ENCODE measurements at regions of chr2 and their contacts with region 1.

Region 1: GRCh38 chr2:42859006-42859552 is 66.7 kb upstream of the HAAO start:
- DNase-seq: peak; percentile 17 to 77 (median 50)
- ATAC-seq: peak; percentile 62
- H3K4me3 ChIP-seq: no peak overlapping the region
- H3K4me3 Mint-ChIP-seq: no peak overlapping the region
- H3K27ac ChIP-seq: no peak overlapping the region
- H3K27ac Mint-ChIP-seq: no peak overlapping the region
- H3K4me1 ChIP-seq: no peaks in the 10 kb centered on the region
- H3K4me1 Mint-ChIP-seq: no peaks in the 10 kb centered on the region
- H3K27me3 ChIP-seq: no peaks in the 10 kb centered on the region
- H3K27me3 Mint-ChIP-seq: no peaks in the 10 kb centered on the region
- CTCF ChIP-seq: peak; percentile 88

Region 2: GRCh38 chr2:42823744-42824453 is 35.2 kb before region 1 on chr2:
- CTCF ChIA-PET with region 1: no interaction called
- POLR2A ChIA-PET with region 1: no interaction called
- intact Hi-C with region 1: no loop called
- DNase-seq: no peak
- ATAC-seq: no peak
- H3K4me3 ChIP-seq: no peak overlapping the region
- H3K4me3 Mint-ChIP-seq: no peak overlapping the region
- H3K27ac ChIP-seq: no peak overlapping the region
- H3K27ac Mint-ChIP-seq: no peak overlapping the region
- H3K4me1 ChIP-seq: peaks cover 16% of the 10 kb centered on the region
- H3K4me1 Mint-ChIP-seq: peaks cover 15% of the 10 kb centered on the region
- H3K27me3 ChIP-seq: no peaks in the 10 kb centered on the region
- H3K27me3 Mint-ChIP-seq: peaks cover 6% of the 10 kb centered on the region
- CTCF ChIP-seq: no peak

Region 3: DNA sequence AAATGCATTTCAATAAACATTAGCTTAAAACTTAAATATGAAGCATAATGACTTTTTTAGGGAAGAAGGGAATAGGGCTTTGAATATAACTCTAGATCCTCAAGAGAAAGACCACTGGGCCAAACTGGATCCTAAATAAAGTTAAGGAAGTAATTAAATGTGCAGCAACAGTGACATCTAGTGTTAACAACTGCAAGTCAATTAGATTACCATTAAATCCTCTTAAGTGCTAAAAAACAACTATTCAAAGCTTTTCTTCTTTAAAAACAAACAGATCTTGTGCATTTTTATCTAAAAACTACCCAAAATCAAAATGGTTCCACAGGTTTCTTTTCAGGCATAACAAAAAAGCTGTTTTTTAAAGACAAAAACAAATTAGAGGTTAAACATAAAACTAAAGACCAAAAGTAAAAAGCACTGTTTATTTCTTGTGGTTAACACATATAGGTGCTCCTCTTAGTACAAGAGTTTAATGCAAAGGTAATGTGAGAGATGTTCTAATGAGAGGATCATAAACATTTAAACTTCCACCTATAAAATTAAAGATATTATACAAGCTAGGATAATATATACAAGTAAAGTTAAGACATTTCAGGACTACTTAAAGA is 625.3 kb after region 1 on chr2:
- CTCF ChIA-PET with region 1: no interaction called
- POLR2A ChIA-PET with region 1: no interaction called
- intact Hi-C with region 1: loop called in 1 of 2 experiments (anchors 10 kb)
- DNase-seq: peak in 3 of 14 experiments; percentile 68 to 79 (median 76)
- ATAC-seq: no peak
- H3K4me3 ChIP-seq: no peak overlapping the region
- H3K4me3 Mint-ChIP-seq: no peak overlapping the region
- H3K27ac ChIP-seq: no peak overlapping the region
- H3K27ac Mint-ChIP-seq: no peak overlapping the region
- H3K4me1 ChIP-seq: no peaks in the 10 kb centered on the region
- H3K4me1 Mint-ChIP-seq: no peaks in the 10 kb centered on the region
- H3K27me3 ChIP-seq: no peaks in the 10 kb centered on the region
- H3K27me3 Mint-ChIP-seq: no peaks in the 10 kb centered on the region
- CTCF ChIP-seq: peak; percentile 75

Region 4: DNA sequence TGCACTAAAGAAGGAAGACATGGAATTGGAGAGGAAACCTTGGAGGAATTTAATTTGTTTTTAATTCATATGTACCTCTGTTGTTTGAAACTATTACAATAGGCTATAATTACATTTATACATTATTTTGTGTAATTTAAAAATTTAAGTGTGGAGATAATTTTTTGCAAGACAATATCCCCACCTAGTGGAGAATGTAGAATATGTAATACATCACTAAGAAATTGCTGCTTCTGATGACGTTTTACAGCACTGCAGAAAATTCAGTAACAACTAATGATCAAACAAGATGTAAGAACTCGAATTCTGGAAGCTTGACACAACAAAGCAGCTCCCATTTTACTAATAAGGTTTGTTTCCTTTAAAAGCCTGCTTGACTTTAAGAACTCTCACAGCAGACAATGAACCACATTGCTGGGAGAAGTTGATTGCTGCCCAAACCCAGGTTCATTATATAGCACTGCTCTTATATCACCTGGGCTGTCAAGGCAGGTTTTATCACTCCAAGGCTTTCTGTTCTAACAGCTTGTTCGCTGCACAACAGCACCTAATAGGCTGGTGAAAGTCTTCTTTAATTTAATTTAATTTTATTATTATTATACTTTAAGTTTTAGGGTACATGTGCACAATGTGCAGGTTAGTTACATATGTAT is 683.3 kb after region 1 on chr2:
- CTCF ChIA-PET with region 1: no interaction called
- POLR2A ChIA-PET with region 1: no interaction called
- intact Hi-C with region 1: loop called (anchors 1 to 2 kb)
- DNase-seq: peak in 3 of 14 experiments; percentile 63 to 68 (median 65)
- ATAC-seq: peak; percentile 89
- H3K4me3 ChIP-seq: no peak overlapping the region
- H3K4me3 Mint-ChIP-seq: no peak overlapping the region
- H3K27ac ChIP-seq: no peak overlapping the region
- H3K27ac Mint-ChIP-seq: no peak overlapping the region
- H3K4me1 ChIP-seq: peaks cover 3% of the 10 kb centered on the region
- H3K4me1 Mint-ChIP-seq: peaks cover 16% of the 10 kb centered on the region
- H3K27me3 ChIP-seq: no peaks in the 10 kb centered on the region
- H3K27me3 Mint-ChIP-seq: no peaks in the 10 kb centered on the region
- CTCF ChIP-seq: peak; percentile 78

Region 5: DNA sequence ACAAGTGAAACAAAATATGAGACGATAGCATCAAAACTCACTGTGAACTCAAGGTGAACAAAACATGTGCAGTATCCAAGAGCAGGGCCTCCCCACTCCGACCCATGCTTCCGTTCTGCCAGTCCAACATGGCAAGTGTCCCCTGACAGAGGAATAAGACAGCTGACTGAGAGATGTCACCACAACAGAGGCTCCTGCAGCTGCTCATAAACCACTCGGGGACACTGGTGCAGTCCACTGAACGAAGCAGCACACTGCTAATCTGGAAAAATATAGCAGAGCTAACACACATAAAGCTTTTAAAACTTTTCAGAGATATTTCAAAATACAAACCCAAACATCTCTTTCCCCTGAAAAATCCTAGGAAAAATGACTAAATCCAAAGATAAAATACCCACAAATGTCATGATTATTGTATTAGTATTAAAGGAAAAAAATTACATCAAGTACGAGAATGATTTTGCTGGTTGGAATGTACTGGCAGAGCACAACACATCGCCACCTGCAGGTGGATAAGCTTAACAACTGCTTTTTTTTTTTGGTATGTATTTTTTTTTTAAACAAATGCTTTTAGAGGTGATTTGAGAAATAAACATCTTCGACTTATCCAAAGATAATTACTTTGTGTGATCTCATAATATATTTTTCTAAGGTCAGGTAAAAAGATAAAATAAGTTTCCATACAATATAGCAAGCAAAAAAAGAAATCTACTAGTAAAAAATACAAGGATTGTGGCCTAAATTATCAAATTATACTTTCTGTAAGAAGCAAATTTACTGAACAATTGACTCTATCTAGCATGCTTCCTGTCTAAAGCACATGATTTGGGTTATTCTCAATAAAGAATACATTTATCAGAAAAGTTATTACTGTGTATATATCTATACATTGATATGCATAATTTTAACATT is 718.2 kb after region 1 on chr2:
- CTCF ChIA-PET with region 1: interaction called, 4 read pairs
- POLR2A ChIA-PET with region 1: no interaction called
- intact Hi-C with region 1: loop called in 1 of 2 experiments (anchors 1 kb)
- DNase-seq: peak in 8 of 14 experiments; percentile 12 to 76 (median 34)
- ATAC-seq: no peak
- H3K4me3 ChIP-seq: no peak overlapping the region
- H3K4me3 Mint-ChIP-seq: no peak overlapping the region
- H3K27ac ChIP-seq: no peak overlapping the region
- H3K27ac Mint-ChIP-seq: no peak overlapping the region
- H3K4me1 ChIP-seq: peaks cover 4% of the 10 kb centered on the region
- H3K4me1 Mint-ChIP-seq: peaks cover 23% of the 10 kb centered on the region
- H3K27me3 ChIP-seq: no peaks in the 10 kb centered on the region
- H3K27me3 Mint-ChIP-seq: no peaks in the 10 kb centered on the region
- CTCF ChIP-seq: peak; percentile 92

Region 6: DNA sequence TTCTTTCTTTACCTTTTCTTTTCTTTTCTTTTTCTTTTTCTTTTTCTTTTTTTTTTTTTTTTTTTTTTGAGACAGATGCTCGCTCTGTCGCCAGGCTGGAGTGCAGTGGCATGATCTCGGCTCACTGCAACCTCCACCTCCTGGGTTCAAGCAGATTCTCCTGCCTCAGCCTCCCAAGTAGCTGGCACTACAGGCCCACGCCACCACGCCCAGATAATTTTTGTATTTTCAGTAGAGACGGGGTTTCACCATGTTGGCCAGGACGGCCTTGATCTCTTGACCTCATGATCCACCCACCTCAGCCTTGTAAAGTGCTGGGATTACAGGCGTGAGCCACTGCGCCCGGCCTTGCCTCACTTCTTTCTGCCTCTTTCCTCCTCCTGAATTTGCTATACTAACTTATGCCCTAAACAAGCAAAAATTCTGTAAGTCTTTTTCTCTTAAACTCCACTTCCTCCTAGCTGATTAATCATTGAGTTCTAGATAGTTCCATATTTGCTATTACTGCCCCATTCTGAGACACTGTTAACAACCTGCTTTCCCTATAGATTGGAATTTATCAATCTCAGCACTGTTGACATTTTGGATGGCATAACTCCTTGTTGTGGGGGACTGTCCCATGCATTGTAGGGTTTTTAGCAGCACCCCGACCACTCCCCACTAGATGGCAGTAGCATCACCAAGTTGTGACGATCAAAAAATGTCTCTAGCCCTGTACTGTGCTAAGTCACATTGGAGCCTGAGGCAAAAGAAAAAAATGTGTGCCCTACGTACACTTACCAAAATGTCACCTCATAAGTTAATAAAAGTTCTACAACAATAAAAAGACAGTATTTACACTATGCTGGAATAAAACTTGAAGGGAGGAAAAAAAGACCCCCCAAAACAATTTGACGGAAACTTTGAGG is 753.2 kb after region 1 on chr2:
- CTCF ChIA-PET with region 1: no interaction called
- POLR2A ChIA-PET with region 1: no interaction called
- intact Hi-C with region 1: loop called (anchors 2 to 10 kb)
- DNase-seq: peak; percentile 52 to 85 (median 64)
- ATAC-seq: peak; percentile 96
- H3K4me3 ChIP-seq: no peak overlapping the region
- H3K4me3 Mint-ChIP-seq: no peak overlapping the region
- H3K27ac ChIP-seq: no peak overlapping the region
- H3K27ac Mint-ChIP-seq: no peak overlapping the region
- H3K4me1 ChIP-seq: no peaks in the 10 kb centered on the region
- H3K4me1 Mint-ChIP-seq: no peaks in the 10 kb centered on the region
- H3K27me3 ChIP-seq: no peaks in the 10 kb centered on the region
- H3K27me3 Mint-ChIP-seq: peaks cover 4% of the 10 kb centered on the region
- CTCF ChIP-seq: peak; percentile 80